Activated naive CD4-positive, alpha-beta T cell treated with anti-CD3 and anti-CD28 coated beads, Interleukin-2, amount 10 ng/mL, durations not matched to agents 7 days and 5 days (primary cell): ENCODE measurements at regions of chr17 and their contacts with region 1.

Region 1: DNA sequence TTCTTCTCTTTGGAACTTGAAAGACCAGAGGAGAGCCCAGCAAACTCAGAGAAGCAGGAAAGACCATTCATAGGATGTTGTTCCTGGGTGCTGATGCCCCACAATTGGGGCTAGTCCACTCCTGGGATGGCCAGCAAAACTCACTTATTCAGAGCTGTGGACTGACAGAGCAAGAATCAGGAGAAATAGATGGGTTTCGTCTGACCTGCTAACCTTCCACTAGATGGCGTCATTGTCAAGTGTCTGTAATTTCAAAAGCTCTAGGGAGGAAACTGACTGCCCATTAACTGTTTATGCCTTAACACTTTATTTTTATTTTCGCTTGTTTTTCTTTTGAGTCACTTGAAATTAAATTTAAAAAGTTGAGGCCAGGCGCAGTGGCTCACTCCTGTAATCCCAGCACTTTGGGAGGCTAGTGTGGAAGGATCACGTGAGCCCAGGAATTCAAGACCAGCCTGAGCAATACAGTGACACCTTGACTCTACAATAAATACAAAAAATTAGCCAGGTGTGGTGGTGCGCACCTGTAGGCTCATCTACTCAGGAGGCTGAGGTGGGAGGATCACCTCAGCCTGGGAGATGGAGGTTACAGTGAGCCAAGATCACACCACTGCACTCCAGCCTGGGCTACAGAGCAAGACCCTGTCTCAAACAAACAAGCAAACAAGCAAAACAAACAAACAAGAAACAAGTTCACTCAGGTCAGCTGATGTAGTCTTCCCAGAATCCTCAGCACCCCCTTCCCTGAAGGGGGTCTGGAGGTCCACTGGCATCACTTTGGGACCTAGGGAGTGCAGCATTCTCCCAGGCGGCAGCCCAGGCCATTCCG is 28.6 kb upstream of the MILR1 start:
- DNase-seq: peak; percentile 38
- H3K4me3 Mint-ChIP-seq: no peak overlapping the region
- H3K27ac Mint-ChIP-seq: no peak overlapping the region
- H3K4me1 Mint-ChIP-seq: peaks cover 3% of the 10 kb centered on the region
- H3K27me3 Mint-ChIP-seq: peaks cover 29% of the 10 kb centered on the region

Region 2: DNA sequence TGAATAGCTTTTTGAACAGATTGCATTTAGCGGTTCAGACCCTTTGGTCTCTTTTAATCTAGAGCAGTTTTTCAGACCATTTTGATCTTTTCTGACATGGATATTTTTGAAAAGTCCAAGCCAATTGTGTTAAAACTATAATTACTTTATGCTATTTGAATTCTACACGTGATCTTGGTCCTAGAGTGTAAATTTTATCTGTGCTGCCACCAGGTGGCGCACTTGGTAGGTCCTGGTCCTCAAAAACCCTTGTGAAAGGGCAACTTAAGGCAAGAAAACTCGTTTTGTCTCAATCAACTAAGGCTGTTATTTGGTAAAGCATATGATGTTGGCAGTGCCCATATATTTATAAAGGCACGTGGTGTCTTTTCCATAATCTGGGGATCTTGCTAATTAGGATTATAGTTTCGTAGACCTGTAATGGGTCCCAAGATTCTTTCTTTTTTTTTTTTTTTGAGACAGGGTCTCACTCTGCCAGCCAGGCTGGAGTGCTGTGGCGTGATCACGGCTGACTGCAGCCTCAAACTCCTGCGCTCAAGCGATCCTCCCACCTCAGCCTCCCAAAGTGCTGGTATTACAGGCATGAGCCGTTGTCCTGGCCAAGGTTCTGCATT is 113.4 kb before region 1 on chr17:
- CTCF ChIA-PET with region 1: interaction called, 44 read pairs
- DNase-seq: peak; percentile 78
- H3K4me3 Mint-ChIP-seq: no peak overlapping the region
- H3K27ac Mint-ChIP-seq: no peak overlapping the region
- H3K4me1 Mint-ChIP-seq: no peaks in the 10 kb centered on the region
- H3K27me3 Mint-ChIP-seq: peaks cover 15% of the 10 kb centered on the region

Region 3: DNA sequence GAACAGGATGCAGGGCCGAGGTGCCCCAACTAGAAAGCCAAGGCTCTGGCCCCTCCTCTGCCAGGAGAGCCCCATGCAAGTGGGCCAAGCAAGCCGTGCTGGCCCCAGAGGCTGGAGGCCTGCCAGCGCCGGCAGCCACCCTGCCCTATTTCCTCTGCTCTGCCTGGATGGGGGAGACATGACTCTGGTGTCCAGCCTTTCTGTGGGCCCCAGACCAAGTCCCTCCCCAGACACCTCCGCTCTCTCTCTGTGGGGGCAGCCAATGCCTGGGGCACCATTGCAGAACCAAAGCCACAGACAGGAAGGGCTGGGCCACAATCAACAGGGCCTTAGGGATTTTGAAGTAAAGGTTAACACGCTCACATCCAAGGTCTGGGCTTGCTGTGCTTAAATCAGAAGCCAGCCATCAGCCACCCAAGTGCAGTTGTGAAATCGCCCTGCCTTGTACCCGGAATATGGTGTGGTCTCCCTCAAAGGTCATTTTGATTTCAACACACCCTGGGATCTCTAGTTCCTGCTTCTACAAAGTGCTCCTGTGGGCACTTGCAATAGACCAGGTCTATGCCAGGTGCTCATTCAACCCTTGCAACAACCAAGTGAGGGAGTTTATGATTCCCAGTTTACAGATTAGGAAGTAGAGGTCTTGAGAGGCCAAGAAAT is 93.8 kb before region 1 on chr17:
- CTCF ChIA-PET with region 1: interaction called, 126 read pairs
- DNase-seq: no peak
- H3K4me3 Mint-ChIP-seq: no peak overlapping the region
- H3K27ac Mint-ChIP-seq: peak overlapping the region; percentile 34
- H3K4me1 Mint-ChIP-seq: peaks cover 14% of the 10 kb centered on the region
- H3K27me3 Mint-ChIP-seq: no peaks in the 10 kb centered on the region

Region 4: GRCh38 chr17:64431534-64431933 is 11.2 kb after region 1 on chr17:
- CTCF ChIA-PET with region 1: interaction called, 22 read pairs
- DNase-seq: no peak
- H3K4me3 Mint-ChIP-seq: no peak overlapping the region
- H3K27ac Mint-ChIP-seq: no peak overlapping the region
- H3K4me1 Mint-ChIP-seq: no peaks in the 10 kb centered on the region
- H3K27me3 Mint-ChIP-seq: peaks cover 24% of the 10 kb centered on the region

Region 5: DNA sequence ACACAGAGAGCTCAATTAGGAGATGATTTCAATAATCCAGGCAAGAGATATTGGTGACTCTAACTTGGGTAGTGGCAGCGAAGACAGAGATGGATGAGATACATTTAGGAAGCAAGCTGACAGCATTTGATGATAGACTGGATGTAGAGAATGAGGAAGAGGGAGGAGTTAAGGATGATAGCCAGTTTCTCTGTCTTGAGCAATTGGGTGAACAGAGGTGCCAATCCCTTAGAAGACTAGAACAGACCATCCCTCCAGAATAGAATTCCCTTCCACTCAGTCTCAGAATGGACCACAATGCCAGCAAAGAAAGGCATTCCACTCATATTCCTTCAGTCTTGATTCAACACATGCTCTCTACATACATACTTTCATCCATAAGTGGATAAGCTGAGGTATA is 59.3 kb after region 1 on chr17:
- CTCF ChIA-PET with region 1: interaction called, 46 read pairs
- DNase-seq: no peak
- H3K4me3 Mint-ChIP-seq: no peak overlapping the region
- H3K27ac Mint-ChIP-seq: no peak overlapping the region
- H3K4me1 Mint-ChIP-seq: peaks cover 8% of the 10 kb centered on the region
- H3K27me3 Mint-ChIP-seq: no peaks in the 10 kb centered on the region

Region 6: GRCh38 chr17:64506576-64507477 is 86.5 kb after region 1 on chr17 and contains the start of gene CEP95:
- CTCF ChIA-PET with region 1: interaction called, 10 read pairs
- DNase-seq: peak; percentile 97
- H3K4me3 Mint-ChIP-seq: peak within 1 kb of the TSS; percentile 95
- H3K27ac Mint-ChIP-seq: peak within 1 kb of the TSS; percentile 100
- H3K4me1 Mint-ChIP-seq: peaks cover 63% of the 10 kb centered on the region
- H3K27me3 Mint-ChIP-seq: peaks cover 9% of the 10 kb centered on the region

Region 7: DNA sequence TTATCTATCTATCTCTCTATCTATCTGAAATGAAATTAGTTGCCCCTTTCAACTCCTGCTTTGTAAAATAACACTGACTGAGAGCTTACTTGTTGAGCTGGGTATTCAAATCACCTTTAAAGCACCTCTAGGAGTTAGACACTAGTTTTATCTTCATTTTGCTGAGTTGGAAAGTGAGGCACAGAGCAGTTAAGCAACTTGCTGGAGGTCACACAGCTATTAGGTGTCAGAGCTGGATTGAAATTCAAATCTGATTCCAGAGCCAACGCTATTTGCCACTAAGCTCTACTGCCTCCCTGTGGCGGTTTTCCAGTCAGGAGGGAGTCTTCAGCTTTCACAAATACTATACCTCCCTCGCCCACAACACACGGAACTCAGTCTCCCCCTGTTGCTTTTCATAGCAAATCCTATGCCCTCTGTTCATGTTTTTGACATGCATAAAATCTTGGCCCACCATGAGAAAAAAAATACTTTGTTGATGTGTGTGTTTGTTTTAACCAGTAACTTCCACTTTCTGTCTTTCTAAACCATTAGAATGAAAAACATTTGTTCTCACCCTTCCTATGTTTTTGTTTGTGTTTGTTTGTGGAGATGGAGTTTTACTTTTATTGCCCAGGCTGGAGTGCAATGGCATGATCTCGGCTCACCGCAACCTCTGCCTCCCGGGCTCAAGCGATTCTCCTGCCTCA is 316.6 kb after region 1 on chr17:
- CTCF ChIA-PET with region 1: interaction called, 17 read pairs
- DNase-seq: peak; percentile 75
- H3K4me3 Mint-ChIP-seq: no peak overlapping the region
- H3K27ac Mint-ChIP-seq: no peak overlapping the region
- H3K4me1 Mint-ChIP-seq: peaks cover 18% of the 10 kb centered on the region
- H3K27me3 Mint-ChIP-seq: peaks cover 4% of the 10 kb centered on the region